ENCODE measurements at regions of chr1 and their contacts with region 1.

Region 1: GRCh38 chr1:228734881-228735801 is at the start of gene RHOU:
- DNase-seq: peak; percentile 44 to 80 (median 71)
- ATAC-seq: peak; percentile 92
- H3K4me3 ChIP-seq: peak within 1 kb of the TSS; percentile 70
- H3K4me3 Mint-ChIP-seq: peak within 1 kb of the TSS; percentile 80 to 94 (median 90)
- H3K27ac ChIP-seq: peak within 1 kb of the TSS; percentile 27
- H3K27ac Mint-ChIP-seq: peak within 1 kb of the TSS; percentile 10 to 64 (median 45)
- H3K4me1 ChIP-seq: peaks cover 0 to 7% of the 10 kb centered on the region in 2 donors
- H3K4me1 Mint-ChIP-seq: peaks cover 9 to 34% (median 14%) of the 10 kb centered on the region in 7 donors
- H3K27me3 ChIP-seq: no peaks in the 10 kb centered on the region
- H3K27me3 Mint-ChIP-seq: peaks cover 0 to 52% (median 13%) of the 10 kb centered on the region in 5 donors
- total RNA-seq, gene RHOU: 1.3 to 6.5 (median 1.8) TPM

Region 2: DNA sequence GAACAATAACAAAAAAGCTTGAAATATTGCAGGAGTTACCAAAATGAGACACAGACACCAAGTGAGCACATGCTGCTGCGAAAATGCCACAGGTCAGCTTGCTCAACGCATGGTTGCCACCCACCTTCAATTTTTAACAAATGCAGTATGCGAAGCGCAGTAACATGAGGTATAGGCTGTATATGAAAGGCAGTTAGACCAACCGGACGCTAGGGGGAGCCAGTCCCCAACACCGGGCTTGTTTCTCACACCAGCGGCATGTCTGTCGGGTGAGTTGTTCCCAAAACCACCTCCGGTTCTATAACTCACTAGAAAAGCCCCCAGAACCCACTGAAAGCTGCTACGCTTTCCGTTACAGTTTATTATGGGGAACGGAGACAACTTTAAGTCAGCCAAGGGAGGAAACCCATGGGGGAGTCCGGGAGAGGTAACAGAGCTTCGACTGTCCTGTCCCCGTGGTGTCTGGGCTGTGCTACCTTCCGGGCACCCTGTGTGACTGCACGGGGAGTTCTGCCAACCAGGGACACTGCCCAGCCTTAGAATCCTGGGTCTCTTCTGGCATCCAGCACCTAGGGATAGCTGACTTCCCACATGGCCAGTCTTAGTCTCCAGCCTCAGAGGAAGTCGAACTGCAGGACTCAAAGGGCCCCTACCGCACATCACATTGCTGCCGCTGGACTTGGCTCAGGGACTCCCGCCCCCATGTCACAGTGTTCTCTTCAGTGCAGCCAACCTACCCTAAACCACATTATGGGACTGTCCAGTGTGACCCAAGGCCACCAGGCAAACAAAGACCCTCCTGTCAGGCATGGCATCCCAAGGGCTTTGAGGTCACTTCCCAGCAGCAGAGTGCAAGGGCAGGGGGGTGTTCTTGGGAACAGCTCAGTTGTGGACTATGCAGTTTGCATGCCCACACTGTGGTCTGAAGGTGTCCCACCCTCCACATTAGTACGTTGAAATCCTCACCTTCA is 234.0 kb before region 1 on chr1:
- CTCF ChIA-PET with region 1: no interaction called
- POLR2A ChIA-PET with region 1: no interaction called
- intact Hi-C with region 1: loop called in 1 of 2 experiments (anchors 1 kb)
- DNase-seq: peak; percentile 72 to 89 (median 85)
- ATAC-seq: peak; percentile 99
- H3K4me3 ChIP-seq: peak overlapping the region; percentile 44
- H3K4me3 Mint-ChIP-seq: peak overlapping the region; percentile 71 to 86 (median 80)
- H3K27ac ChIP-seq: no peak overlapping the region
- H3K27ac Mint-ChIP-seq: peak overlapping the region in 5 of 9 donors; percentile 19 to 72 (median 66)
- H3K4me1 ChIP-seq: peaks cover 9 to 14% of the 10 kb centered on the region in 2 donors
- H3K4me1 Mint-ChIP-seq: peaks cover 9 to 31% (median 18%) of the 10 kb centered on the region in 7 donors
- H3K27me3 ChIP-seq: no peaks in the 10 kb centered on the region
- H3K27me3 Mint-ChIP-seq: peaks cover 0 to 8% (median 0%) of the 10 kb centered on the region in 5 donors

Region 3: DNA sequence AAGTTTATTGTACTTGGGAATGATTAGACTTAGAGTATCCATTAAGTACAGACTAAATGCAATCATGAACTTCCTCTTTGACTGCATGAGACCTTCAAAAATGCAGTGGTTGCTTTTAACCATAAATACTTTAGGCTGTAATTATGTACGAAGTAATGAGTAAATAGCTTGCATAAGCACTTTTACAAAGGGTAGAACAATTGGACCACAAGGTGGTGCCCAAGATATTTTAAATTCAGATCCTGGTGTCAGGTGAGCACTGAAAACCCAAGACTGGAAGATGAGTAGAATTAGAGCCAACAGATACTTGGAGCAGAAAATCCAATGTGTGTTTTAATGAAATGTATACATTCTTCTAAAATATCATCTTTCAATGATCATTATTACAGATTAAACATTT is 43.2 kb before region 1 on chr1:
- CTCF ChIA-PET with region 1: interaction called, 3 read pairs
- POLR2A ChIA-PET with region 1: no interaction called
- intact Hi-C with region 1: loop called in 1 of 2 experiments (anchors 1 kb)
- DNase-seq: peak in 7 of 9 donors; percentile 20 to 57 (median 42)
- ATAC-seq: peak; percentile 45
- H3K4me3 ChIP-seq: no peak overlapping the region
- H3K4me3 Mint-ChIP-seq: no peak overlapping the region
- H3K27ac ChIP-seq: no peak overlapping the region
- H3K27ac Mint-ChIP-seq: no peak overlapping the region
- H3K4me1 ChIP-seq: peaks cover 0 to 7% of the 10 kb centered on the region in 2 donors
- H3K4me1 Mint-ChIP-seq: peaks cover 5 to 14% (median 8%) of the 10 kb centered on the region in 7 donors
- H3K27me3 ChIP-seq: no peaks in the 10 kb centered on the region
- H3K27me3 Mint-ChIP-seq: peaks cover 6 to 38% (median 13%) of the 10 kb centered on the region in 5 donors

Region 4: GRCh38 chr1:228810878-228811711 is 76.0 kb after region 1 on chr1:
- CTCF ChIA-PET with region 1: no interaction called
- POLR2A ChIA-PET with region 1: no interaction called
- intact Hi-C with region 1: loop called in 1 of 2 experiments (anchors 2 kb)
- DNase-seq: peak in 1 of 9 donors; percentile 22
- ATAC-seq: no peak
- H3K4me3 ChIP-seq: no peak overlapping the region
- H3K4me3 Mint-ChIP-seq: peak overlapping the region in 2 of 10 donors; percentile 28 to 69
- H3K27ac ChIP-seq: no peak overlapping the region
- H3K27ac Mint-ChIP-seq: peak overlapping the region; percentile 17 to 95 (median 52)
- H3K4me1 ChIP-seq: peaks cover 7 to 11% of the 10 kb centered on the region in 2 donors
- H3K4me1 Mint-ChIP-seq: peaks cover 22 to 67% (median 31%) of the 10 kb centered on the region in 7 donors
- H3K27me3 ChIP-seq: no peaks in the 10 kb centered on the region
- H3K27me3 Mint-ChIP-seq: no peaks in the 10 kb centered on the region

Region 5: DNA sequence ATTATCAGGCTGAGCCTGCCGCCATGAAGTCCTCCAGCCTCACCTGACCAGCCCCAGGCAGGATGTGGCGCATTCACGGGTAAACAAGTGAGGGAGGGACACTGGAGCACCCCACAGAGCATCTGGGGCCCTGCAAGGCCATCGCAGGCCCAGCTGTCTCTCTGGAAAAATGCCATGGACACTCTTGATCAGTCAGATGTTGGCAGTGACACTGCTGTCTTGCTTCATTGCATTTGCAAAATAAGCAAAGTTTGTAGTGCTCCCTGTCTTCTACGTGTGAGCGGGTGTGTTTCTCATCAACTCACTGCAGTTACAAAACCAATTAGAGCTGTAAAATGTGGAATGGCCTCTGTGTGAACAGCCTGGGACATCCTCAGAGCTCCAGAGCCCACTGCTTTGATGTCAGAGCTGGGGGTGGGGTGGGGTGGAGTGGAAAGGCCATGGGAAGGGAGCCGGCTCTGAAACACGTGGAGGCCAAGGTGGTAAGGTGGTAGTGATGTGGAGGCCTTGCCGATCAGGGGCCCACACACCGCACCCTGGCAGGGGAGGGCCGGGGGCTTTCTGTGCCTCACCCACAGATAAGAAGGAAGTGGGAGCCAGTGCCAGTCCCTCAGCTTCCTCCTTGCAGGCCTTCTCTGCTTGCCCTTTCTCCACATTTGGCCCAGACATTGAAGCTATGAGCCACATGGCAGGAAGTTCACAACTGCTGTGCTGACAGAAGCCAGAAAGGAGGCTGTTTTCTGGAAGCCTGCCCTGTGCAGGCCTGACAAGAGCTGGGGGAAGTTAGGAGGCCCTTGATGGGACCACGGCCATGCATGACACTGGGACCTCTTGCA is 255.1 kb after region 1 on chr1:
- CTCF ChIA-PET with region 1: no interaction called
- POLR2A ChIA-PET with region 1: no interaction called
- intact Hi-C with region 1: loop called in 1 of 2 experiments (anchors 10 kb)
- DNase-seq: no peak
- ATAC-seq: peak; percentile 72
- H3K4me3 ChIP-seq: no peak overlapping the region
- H3K4me3 Mint-ChIP-seq: peak overlapping the region in 1 of 10 donors; percentile 42
- H3K27ac ChIP-seq: no peak overlapping the region
- H3K27ac Mint-ChIP-seq: peak overlapping the region in 1 of 9 donors; percentile 53
- H3K4me1 ChIP-seq: peaks cover 0 to 3% of the 10 kb centered on the region in 2 donors
- H3K4me1 Mint-ChIP-seq: peaks cover 5 to 27% (median 9%) of the 10 kb centered on the region in 7 donors
- H3K27me3 ChIP-seq: no peaks in the 10 kb centered on the region
- H3K27me3 Mint-ChIP-seq: peaks cover 0 to 21% (median 0%) of the 10 kb centered on the region in 5 donors

Region 6: DNA sequence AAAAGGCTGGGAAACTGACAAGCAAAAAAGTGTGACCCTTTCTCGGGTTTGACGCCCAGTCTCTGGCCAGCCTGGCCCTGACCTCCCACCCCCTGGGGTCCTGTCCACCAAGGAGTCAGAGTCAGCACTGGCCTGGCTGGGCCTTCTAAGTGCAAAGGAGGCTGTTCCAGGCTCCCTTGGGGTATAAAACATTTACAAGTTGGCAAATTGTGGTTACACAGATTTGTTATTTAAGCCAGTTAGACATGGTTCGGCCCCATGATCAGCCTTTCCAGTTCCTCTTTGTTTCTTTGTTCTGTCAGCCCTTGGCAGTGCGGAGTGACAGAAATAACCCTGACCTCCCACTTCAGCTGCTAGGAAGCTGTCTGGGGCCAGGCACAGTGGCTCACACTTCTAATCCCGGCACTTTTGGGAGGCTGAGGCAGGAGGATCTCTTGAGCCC is 374.2 kb after region 1 on chr1:
- CTCF ChIA-PET with region 1: no interaction called
- POLR2A ChIA-PET with region 1: no interaction called
- intact Hi-C with region 1: no loop called
- DNase-seq: no peak
- ATAC-seq: no peak
- H3K4me3 ChIP-seq: no peak overlapping the region
- H3K4me3 Mint-ChIP-seq: no peak overlapping the region
- H3K27ac ChIP-seq: no peak overlapping the region
- H3K27ac Mint-ChIP-seq: no peak overlapping the region
- H3K4me1 ChIP-seq: peaks cover 0 to 3% of the 10 kb centered on the region in 2 donors
- H3K4me1 Mint-ChIP-seq: peaks cover 4 to 19% (median 10%) of the 10 kb centered on the region in 7 donors
- H3K27me3 ChIP-seq: no peaks in the 10 kb centered on the region
- H3K27me3 Mint-ChIP-seq: peaks cover 0 to 12% (median 0%) of the 10 kb centered on the region in 5 donors

Region 7: GRCh38 chr1:229156872-229157271 is 421.7 kb after region 1 on chr1:
- CTCF ChIA-PET with region 1: interaction called, 4 read pairs
- POLR2A ChIA-PET with region 1: no interaction called
- intact Hi-C with region 1: loop called in 1 of 2 experiments (anchors 1 kb)
- DNase-seq: no peak
- ATAC-seq: no peak
- H3K4me3 ChIP-seq: no peak overlapping the region
- H3K4me3 Mint-ChIP-seq: peak overlapping the region in 3 of 10 donors; percentile 22 to 72 (median 61)
- H3K27ac ChIP-seq: no peak overlapping the region
- H3K27ac Mint-ChIP-seq: peak overlapping the region in 2 of 9 donors; percentile 1 to 51
- H3K4me1 ChIP-seq: peaks cover 0 to 21% of the 10 kb centered on the region in 2 donors
- H3K4me1 Mint-ChIP-seq: peaks cover 12 to 50% (median 31%) of the 10 kb centered on the region in 7 donors
- H3K27me3 ChIP-seq: no peaks in the 10 kb centered on the region
- H3K27me3 Mint-ChIP-seq: peaks cover 0 to 4% (median 0%) of the 10 kb centered on the region in 5 donors

Region 8: GRCh38 chr1:229514578-229515275 is 779.6 kb after region 1 on chr1:
- CTCF ChIA-PET with region 1: no interaction called
- POLR2A ChIA-PET with region 1: interaction called, 3 read pairs
- intact Hi-C with region 1: loop called in 1 of 2 experiments (anchors 2 kb)
- DNase-seq: peak in 8 of 9 donors; percentile 34 to 76 (median 70)
- ATAC-seq: peak; percentile 98
- H3K4me3 ChIP-seq: no peak overlapping the region
- H3K4me3 Mint-ChIP-seq: no peak overlapping the region
- H3K27ac ChIP-seq: no peak overlapping the region
- H3K27ac Mint-ChIP-seq: peak overlapping the region in 5 of 9 donors; percentile 6 to 86 (median 32)
- H3K4me1 ChIP-seq: no peaks in the 10 kb centered on the region
- H3K4me1 Mint-ChIP-seq: peaks cover 0 to 9% (median 7%) of the 10 kb centered on the region in 7 donors
- H3K27me3 ChIP-seq: no peaks in the 10 kb centered on the region
- H3K27me3 Mint-ChIP-seq: peaks cover 0 to 5% (median 0%) of the 10 kb centered on the region in 5 donors

Measured in naive thymus-derived CD4-positive, alpha-beta T cell (primary cell).